B cell (primary cell): ENCODE measurements at regions of chrX and their contacts with region 1.

Region 1: GRCh38 chrX:132292793-132293192 is 73.5 kb upstream of the RAP2C start:
- DNase-seq: peak; percentile 60
- ATAC-seq: peak; percentile 36
- H3K4me3 ChIP-seq: no peak overlapping the region
- H3K4me3 Mint-ChIP-seq: no peak overlapping the region
- H3K27ac ChIP-seq: no peak overlapping the region
- H3K27ac Mint-ChIP-seq: no peak overlapping the region
- H3K4me1 ChIP-seq: no peaks in the 10 kb centered on the region
- H3K4me1 Mint-ChIP-seq: no peaks in the 10 kb centered on the region
- H3K27me3 ChIP-seq: no peaks in the 10 kb centered on the region
- H3K27me3 Mint-ChIP-seq: no peaks in the 10 kb centered on the region
- CTCF ChIP-seq: peak; percentile 74

Region 2: GRCh38 chrX:132092439-132093065 is 200.2 kb before region 1 on chrX:
- CTCF ChIA-PET with region 1: interaction called, 12 read pairs
- POLR2A ChIA-PET with region 1: no interaction called
- intact Hi-C with region 1: no loop called
- DNase-seq: peak; percentile 59
- ATAC-seq: peak; percentile 65
- H3K4me3 ChIP-seq: no peak overlapping the region
- H3K4me3 Mint-ChIP-seq: no peak overlapping the region
- H3K27ac ChIP-seq: no peak overlapping the region
- H3K27ac Mint-ChIP-seq: no peak overlapping the region
- H3K4me1 ChIP-seq: no peaks in the 10 kb centered on the region
- H3K4me1 Mint-ChIP-seq: no peaks in the 10 kb centered on the region
- H3K27me3 ChIP-seq: no peaks in the 10 kb centered on the region
- H3K27me3 Mint-ChIP-seq: peaks cover 3% of the 10 kb centered on the region
- CTCF ChIP-seq: peak; percentile 67

Region 3: GRCh38 chrX:132231587-132231986 is 61.2 kb before region 1 on chrX:
- CTCF ChIA-PET with region 1: interaction called, 9 read pairs
- POLR2A ChIA-PET with region 1: no interaction called
- intact Hi-C with region 1: loop called (anchors 10 kb)
- DNase-seq: no peak
- ATAC-seq: no peak
- H3K4me3 ChIP-seq: no peak overlapping the region
- H3K4me3 Mint-ChIP-seq: peak overlapping the region; percentile 21
- H3K27ac ChIP-seq: no peak overlapping the region
- H3K27ac Mint-ChIP-seq: no peak overlapping the region
- H3K4me1 ChIP-seq: no peaks in the 10 kb centered on the region
- H3K4me1 Mint-ChIP-seq: peaks cover 17% of the 10 kb centered on the region
- H3K27me3 ChIP-seq: no peaks in the 10 kb centered on the region
- H3K27me3 Mint-ChIP-seq: no peaks in the 10 kb centered on the region
- CTCF ChIP-seq: no peak

Region 4: DNA sequence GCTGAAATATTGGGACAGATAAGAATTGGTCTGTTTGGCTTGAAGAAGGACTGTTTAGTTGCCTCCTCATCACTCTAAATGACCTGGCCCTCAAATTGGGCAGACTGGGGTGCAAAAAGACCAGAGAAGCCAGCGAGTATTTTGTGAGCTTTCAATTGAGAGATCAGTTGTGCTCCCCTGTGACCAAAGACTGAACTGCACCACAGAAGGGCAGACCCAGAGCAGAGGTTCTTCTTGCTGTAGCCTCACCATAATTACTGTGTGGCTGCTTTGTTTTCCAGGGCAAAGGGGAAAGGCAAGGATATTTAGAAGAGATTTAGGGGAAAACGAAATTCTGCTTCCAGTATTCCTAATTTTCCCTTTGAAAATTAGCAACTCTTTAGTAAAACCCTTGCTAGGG is 300.1 kb after region 1 on chrX:
- CTCF ChIA-PET with region 1: interaction called, 35 read pairs
- POLR2A ChIA-PET with region 1: no interaction called
- intact Hi-C with region 1: loop called (anchors 1 kb)
- DNase-seq: peak; percentile 30
- ATAC-seq: no peak
- H3K4me3 ChIP-seq: no peak overlapping the region
- H3K4me3 Mint-ChIP-seq: no peak overlapping the region
- H3K27ac ChIP-seq: no peak overlapping the region
- H3K27ac Mint-ChIP-seq: no peak overlapping the region
- H3K4me1 ChIP-seq: no peaks in the 10 kb centered on the region
- H3K4me1 Mint-ChIP-seq: no peaks in the 10 kb centered on the region
- H3K27me3 ChIP-seq: no peaks in the 10 kb centered on the region
- H3K27me3 Mint-ChIP-seq: no peaks in the 10 kb centered on the region
- CTCF ChIP-seq: peak; percentile 54

Region 5: GRCh38 chrX:132631579-132632232 is 338.9 kb after region 1 on chrX:
- CTCF ChIA-PET with region 1: interaction called, 62 read pairs
- POLR2A ChIA-PET with region 1: no interaction called
- intact Hi-C with region 1: loop called (anchors 1 kb)
- DNase-seq: peak; percentile 53
- ATAC-seq: no peak
- H3K4me3 ChIP-seq: no peak overlapping the region
- H3K4me3 Mint-ChIP-seq: no peak overlapping the region
- H3K27ac ChIP-seq: no peak overlapping the region
- H3K27ac Mint-ChIP-seq: no peak overlapping the region
- H3K4me1 ChIP-seq: no peaks in the 10 kb centered on the region
- H3K4me1 Mint-ChIP-seq: no peaks in the 10 kb centered on the region
- H3K27me3 ChIP-seq: no peaks in the 10 kb centered on the region
- H3K27me3 Mint-ChIP-seq: no peaks in the 10 kb centered on the region
- CTCF ChIP-seq: peak; percentile 46